GM10248 (cell line): ENCODE measurements at regions of chr5 and their contacts with region 1.

Region 1: DNA sequence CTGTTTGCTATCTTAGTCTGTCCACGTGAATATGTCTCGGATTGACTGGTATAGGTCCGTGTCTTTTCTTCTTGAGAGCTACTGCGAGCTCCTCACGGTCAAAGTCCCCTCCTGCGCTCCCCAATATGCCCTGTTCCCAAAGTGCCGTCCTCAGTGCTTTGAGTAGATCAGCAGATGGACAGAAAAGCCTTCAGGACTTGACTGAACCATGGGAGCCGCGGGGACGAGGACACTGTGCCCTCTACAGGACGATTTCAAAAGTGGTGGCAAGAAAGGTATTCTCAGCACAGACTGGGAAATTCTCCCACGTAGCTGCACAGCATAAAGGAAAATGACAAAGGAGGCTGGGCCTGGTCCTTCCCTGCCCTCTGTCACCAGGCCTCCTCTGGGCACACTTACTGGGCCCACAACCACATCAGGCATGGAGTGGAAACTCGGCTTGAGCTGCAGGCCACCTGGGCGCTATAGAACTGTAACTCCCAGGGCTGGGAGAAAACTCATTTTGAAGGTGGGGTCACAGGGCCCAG is 16.6 kb upstream of the MTMR12 start:
- DNase-seq: peak; percentile 84
- CTCF ChIP-seq: peak; percentile 78

Region 2: GRCh38 chr5:31944684-31945445 is 384.5 kb before region 1 on chr5:
- CTCF ChIA-PET with region 1: no interaction called
- POLR2A ChIA-PET with region 1: no interaction called
- DNase-seq: no peak
- CTCF ChIP-seq: no peak

Region 3: DNA sequence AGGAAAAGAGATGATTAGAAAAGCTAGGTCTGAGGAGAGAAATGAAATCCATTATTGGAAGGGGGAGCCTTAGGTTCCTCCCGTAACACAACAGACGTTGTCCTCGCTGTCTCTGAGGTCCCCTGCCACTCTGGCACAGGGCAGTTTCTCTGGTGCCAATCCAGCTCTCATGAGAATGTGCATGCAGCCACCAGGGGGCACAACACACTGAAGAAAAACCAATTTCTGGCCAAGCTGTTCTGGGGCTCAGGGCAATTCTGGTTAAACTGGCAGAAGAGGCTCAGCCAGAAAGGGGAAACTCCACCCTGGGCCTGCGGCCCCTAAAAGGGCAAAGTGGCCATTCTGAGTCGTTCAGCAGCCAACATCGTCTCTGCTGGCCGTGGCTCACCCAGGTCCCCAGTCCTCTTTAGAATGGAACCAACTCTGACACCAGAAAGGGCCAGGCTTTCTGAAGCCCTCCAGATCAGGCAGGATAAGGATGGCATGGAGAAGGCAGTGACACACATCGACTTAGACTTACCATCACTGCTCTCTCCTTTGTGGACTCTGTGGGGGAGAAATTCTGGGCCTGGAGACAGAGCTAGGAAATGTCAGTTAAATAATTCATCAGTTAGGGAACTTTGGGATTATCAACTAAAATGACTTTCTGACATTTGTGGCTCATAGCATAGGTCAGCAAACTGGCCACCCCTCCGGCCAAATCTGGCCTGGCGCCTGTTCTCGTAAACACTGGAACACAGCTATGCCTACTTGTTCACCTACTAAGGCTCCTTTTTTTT is 96.7 kb before region 1 on chr5:
- CTCF ChIA-PET with region 1: interaction called, 204 read pairs
- POLR2A ChIA-PET with region 1: no interaction called
- DNase-seq: peak; percentile 82
- CTCF ChIP-seq: peak; percentile 87

Region 4: GRCh38 chr5:32261198-32261597 is 68.2 kb before region 1 on chr5:
- CTCF ChIA-PET with region 1: interaction called, 14 read pairs
- POLR2A ChIA-PET with region 1: no interaction called
- DNase-seq: peak; percentile 45
- CTCF ChIP-seq: no peak

Region 5: GRCh38 chr5:32357658-32358057 is 28.3 kb after region 1 on chr5:
- CTCF ChIA-PET with region 1: interaction called, 16 read pairs
- POLR2A ChIA-PET with region 1: no interaction called
- DNase-seq: no peak
- CTCF ChIP-seq: no peak

Region 6: DNA sequence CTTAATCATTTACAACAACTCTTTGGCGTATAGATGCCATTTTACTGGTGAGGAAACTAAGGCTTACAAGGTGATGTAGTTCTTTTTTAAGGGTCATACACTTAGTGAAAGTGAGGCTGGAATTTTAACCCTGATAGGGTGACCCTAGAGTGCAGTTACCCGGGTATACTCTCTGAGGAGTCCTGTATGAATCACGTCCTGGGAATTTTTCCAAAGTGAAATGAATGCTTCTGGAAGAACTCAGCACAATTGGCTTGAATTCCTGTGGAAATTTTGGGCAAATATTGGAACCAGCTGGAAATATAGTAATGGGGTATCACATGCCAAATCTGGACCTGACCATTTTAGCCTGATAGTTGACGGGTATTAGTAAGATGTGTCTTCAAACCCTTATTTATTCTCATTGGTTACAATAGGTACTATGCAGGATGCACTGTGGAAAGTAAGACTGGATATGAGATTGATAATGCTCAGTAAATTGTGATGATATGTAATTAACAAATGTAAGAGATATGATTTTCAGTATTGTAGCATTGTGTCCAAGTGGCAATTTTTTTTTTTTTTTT is 270.8 kb after region 1 on chr5:
- CTCF ChIA-PET with region 1: no interaction called
- POLR2A ChIA-PET with region 1: interaction called, 11 read pairs
- DNase-seq: no peak
- CTCF ChIP-seq: no peak